Tibial artery (tissue), 4 donors: ENCODE measurements at regions of chr18 and their contacts with region 1.

Region 1: GRCh38 chr18:21191596-21192307 is 50.3 kb upstream of the GREB1L start:
- DNase-seq: peak; percentile 40 to 69
- H3K4me3 ChIP-seq: no peak overlapping the region
- H3K27ac ChIP-seq: no peak overlapping the region
- H3K4me1 ChIP-seq: peaks cover 0 to 6% (median 2%) of the 10 kb centered on the region in 4 donors
- H3K27me3 ChIP-seq: no peaks in the 10 kb centered on the region
- CTCF ChIP-seq: peak; percentile 20 to 47

Region 2: GRCh38 chr18:21444465-21445023 is 252.8 kb after region 1 on chr18:
- intact Hi-C with region 1: loop called (anchors 2 kb)
- DNase-seq: no peak
- H3K4me3 ChIP-seq: no peak overlapping the region
- H3K27ac ChIP-seq: no peak overlapping the region
- H3K4me1 ChIP-seq: no peaks in the 10 kb centered on the region
- H3K27me3 ChIP-seq: no peaks in the 10 kb centered on the region
- CTCF ChIP-seq: peak; percentile 63 to 64

Region 3: DNA sequence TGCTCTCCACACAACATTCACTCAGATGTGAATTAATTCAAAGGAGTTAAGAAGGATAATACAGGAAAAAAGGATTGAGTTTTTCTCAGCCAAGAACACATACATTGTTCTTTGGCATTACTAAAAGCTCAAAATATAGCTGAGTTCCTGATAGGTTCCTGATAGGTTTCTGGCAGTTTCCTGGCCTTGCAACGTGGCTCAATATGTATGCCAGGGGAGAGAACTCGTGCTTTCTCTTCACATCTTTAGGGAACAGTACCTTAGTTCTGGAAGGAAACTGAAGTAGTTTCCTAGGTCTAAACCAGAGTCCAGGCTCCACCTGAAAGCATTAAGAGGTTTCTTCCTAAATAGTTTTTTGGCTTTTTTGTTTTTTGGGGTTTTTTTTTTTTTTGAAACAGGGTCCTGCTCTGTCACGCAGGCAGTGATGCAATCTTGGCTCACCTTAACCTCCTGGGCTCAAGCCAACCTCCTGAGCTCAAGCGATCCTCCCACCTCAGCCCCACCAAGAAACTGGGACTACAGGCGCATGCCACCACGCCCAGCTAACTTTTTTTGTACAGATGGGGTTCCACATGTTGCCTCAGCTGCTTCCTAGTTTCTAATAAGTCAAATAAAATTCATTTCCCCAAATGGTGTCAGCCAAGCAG is 366.0 kb after region 1 on chr18:
- intact Hi-C with region 1: loop called (anchors 10 kb)
- DNase-seq: no peak
- H3K4me3 ChIP-seq: no peak overlapping the region
- H3K27ac ChIP-seq: no peak overlapping the region
- H3K4me1 ChIP-seq: no peaks in the 10 kb centered on the region
- H3K27me3 ChIP-seq: no peaks in the 10 kb centered on the region
- CTCF ChIP-seq: no peak